ENCODE measurements at regions of chr17 and their contacts with region 1.

Region 1: DNA sequence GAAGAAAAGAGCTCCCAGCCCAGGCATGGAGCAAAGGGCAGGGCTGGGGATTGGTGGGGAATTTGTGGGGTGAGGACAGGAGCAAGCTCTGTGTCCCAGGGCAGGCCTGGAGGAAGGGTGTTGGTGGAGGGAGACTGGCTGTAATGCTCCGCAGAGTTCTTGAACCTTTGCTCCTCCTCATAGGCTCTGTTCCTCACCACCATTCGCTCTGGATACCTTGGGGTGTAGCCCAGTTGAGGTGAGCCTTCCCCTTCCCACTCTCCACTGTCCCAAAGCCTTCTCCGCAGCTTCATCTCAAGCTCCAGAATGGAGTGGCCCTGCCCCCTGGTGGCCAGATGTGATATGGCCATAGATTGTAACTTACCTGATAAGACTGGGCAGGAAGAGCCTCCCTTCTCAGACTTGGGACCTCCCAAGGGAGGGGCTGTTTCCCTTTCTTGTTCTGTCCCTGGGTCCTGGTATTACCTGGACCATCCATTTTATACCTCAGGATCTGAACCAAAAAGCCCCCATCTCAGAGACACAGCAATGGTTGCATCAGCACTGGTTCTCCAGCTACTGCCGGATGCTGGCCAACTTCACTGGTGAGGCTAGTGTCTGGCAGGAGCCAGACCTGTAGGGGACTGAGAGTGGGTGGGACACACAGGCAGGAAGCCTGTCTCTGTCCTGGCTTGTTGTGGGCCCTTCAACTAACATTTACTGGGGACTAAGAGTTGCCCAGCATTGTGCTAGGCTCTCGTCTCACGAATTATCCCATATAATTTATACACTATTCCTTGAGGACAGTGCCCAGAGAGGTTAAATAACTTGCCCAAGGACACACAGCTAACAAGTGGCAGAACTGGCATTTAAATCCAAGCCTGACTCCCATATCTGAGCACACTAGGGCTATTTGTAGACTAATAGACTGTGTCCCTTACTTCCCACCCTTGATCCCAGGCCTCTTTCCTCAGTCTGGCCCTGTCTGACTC is 19.1 kb upstream of the STAC2 start:
- DNase-seq: peak; percentile 93 to 99
- H3K4me3 ChIP-seq: no peak overlapping the region
- H3K27ac ChIP-seq: no peak overlapping the region
- H3K4me1 ChIP-seq: peaks cover 0 to 9% (median 5%) of the 10 kb centered on the region in 4 experiments; a peak in 6 of 7 replicates
- H3K27me3 ChIP-seq: no peaks in the 10 kb centered on the region
- CTCF ChIP-seq: peak; percentile 83 to 99 (median 93)
- EP300 ChIP-seq: no peak
- POLR2A ChIP-seq: no peak
- RAD21 ChIP-seq: peak; percentile 94 to 96

Region 2: DNA sequence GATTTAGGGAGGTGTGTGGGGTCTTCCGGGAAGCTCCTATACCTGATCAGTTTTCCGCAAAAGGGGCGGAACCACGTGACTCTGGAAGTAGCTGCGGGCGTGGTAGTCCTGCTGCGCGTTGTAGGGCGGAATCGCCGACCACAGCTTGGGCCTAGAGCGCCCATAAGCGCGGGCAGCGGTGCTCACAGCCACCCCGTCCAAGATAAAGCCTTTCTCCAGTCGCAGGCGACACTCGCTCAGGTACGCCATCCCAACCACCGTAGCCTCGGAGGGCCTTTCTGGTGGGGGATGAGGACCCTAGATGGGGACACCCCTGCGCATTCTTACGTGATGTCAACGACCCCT is 403.8 kb before region 1 on chr17:
- CTCF ChIA-PET with region 1: no interaction called
- POLR2A ChIA-PET with region 1: no interaction called
- DNase-seq: no peak
- H3K4me3 ChIP-seq: no peak overlapping the region
- H3K27ac ChIP-seq: no peak overlapping the region
- H3K4me1 ChIP-seq: peaks cover 0 to 5% (median 2%) of the 10 kb centered on the region in 4 experiments; a peak in 2 of 7 replicates
- H3K27me3 ChIP-seq: no peaks in the 10 kb centered on the region
- CTCF ChIP-seq: no peak
- EP300 ChIP-seq: no peak
- POLR2A ChIP-seq: no peak
- RAD21 ChIP-seq: no peak

Region 3: DNA sequence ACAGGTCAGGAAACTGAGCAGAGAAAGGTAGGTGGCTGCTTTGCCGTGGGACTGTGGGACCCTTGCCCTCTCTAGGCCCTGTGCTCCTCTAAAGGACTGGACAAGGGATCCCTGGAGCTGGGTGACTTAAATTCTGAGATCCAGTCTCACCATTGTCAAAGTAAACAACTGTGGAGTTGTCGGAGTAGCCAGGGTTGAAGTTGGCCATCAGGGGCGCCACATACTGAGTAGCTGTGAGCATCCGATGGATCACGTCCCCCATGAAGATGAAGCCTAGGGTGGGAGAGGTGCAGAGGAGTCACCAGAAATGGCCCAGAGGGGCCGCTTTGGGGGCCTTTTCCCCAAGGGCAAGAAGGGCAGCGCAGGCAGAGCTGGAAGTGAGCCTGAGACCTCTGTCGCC is 136.9 kb before region 1 on chr17:
- CTCF ChIA-PET with region 1: no interaction called
- POLR2A ChIA-PET with region 1: no interaction called
- DNase-seq: no peak
- H3K4me3 ChIP-seq: no peak overlapping the region
- H3K27ac ChIP-seq: no peak overlapping the region
- H3K4me1 ChIP-seq: peaks cover 0 to 2% (median 0%) of the 10 kb centered on the region in 4 experiments; a peak in 1 of 7 replicates
- H3K27me3 ChIP-seq: no peaks in the 10 kb centered on the region
- CTCF ChIP-seq: peak; percentile 28 to 42 (median 33); a peak in 3 of 4 replicates
- EP300 ChIP-seq: no peak
- POLR2A ChIP-seq: no peak
- RAD21 ChIP-seq: peak; percentile 4 to 22; a peak in 1 of 4 replicates

Region 4: GRCh38 chr17:39174907-39175694 is 69.8 kb before region 1 on chr17:
- CTCF ChIA-PET with region 1: interaction called, 15 read pairs
- POLR2A ChIA-PET with region 1: interaction called, 3 read pairs
- DNase-seq: peak; percentile 82 to 92
- H3K4me3 ChIP-seq: peak overlapping the region in 1 of 4 experiments; percentile 22; a peak in 1 of 8 replicates
- H3K27ac ChIP-seq: no peak overlapping the region
- H3K4me1 ChIP-seq: peaks cover 0 to 14% (median 10%) of the 10 kb centered on the region in 4 experiments; a peak in 6 of 7 replicates
- H3K27me3 ChIP-seq: no peaks in the 10 kb centered on the region
- CTCF ChIP-seq: peak; percentile 87 to 92 (median 91)
- EP300 ChIP-seq: no peak
- POLR2A ChIP-seq: peak in 1 of 2 experiments; percentile 60; a peak in 1 of 3 replicates
- RAD21 ChIP-seq: peak; percentile 71 to 83

Region 5: DNA sequence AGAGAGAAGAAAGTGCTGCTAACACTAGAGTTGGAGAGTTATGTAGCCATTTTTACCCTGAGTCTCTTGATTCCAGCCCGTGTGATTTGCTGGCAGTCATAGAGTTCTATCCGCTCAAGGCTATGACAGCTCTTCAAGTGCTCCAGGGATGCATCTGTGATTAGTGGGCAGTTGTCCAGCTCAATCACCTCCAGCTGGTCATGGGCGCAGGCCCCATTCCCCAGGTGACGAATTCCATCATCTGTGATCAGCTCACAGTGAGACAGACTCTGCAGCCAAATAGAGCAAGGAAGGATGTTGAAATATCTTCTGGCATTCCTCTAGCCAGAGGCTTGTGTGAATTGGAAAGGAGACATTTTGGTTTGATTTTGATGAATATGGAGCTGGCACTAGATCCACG is 19.2 kb after region 1 on chr17:
- CTCF ChIA-PET with region 1: interaction called, 464 read pairs
- POLR2A ChIA-PET with region 1: interaction called, 3 read pairs
- DNase-seq: no peak
- H3K4me3 ChIP-seq: no peak overlapping the region
- H3K27ac ChIP-seq: no peak overlapping the region
- H3K4me1 ChIP-seq: peaks cover 0 to 2% (median 0%) of the 10 kb centered on the region in 4 experiments; a peak in 2 of 7 replicates
- H3K27me3 ChIP-seq: no peaks in the 10 kb centered on the region
- CTCF ChIP-seq: no peak
- EP300 ChIP-seq: no peak
- POLR2A ChIP-seq: no peak
- RAD21 ChIP-seq: no peak